ENCODE measurements at regions of chr5 and their contacts with region 1.

Region 1: GRCh38 chr5:157253547-157253946 is 12.4 kb upstream of the CYFIP2 start:
- DNase-seq: no peak
- ATAC-seq: peak; percentile 84

Region 2: DNA sequence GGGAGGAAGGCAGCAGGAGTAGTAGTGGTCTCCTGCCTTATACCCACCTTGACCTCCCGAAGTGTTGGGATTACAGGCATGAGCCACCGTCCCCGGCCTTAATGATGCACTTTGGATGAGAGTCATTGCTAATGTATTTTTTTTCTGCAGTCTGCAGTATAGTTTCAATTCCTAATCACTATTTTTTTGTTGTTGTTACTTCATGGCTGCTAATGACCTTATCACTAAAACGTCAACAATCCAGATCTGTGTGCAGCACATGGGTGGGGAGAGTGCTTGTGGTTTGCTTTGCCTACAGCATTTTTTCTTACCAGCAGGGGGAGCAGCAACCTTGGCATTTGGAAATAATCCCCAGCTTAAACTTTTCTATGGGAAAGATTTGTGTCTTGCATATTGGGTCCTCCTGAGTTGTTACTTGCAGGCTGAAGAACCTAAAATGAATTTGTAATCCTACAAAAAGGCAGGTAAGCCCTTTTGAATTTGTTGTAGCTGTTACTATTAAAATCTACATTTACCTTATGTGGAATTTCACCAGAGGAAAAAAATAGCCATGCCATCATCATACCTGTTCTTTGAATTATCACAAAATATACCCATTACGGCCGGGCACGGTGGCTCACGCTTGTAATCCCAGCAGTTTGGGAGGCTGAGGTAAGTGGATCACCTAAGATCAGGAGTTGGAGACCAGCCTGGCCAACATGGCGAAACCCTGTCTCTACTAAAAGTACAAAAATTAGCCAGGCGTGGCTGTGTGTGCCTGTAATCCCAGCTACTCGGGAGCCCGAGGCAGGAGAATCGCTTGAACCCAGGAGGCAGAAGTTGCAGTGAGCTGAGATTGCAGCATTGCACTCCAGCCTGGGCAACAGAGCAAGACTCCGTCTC is 104.6 kb before region 1 on chr5:
- intact Hi-C with region 1: loop called (anchors 5 kb)
- DNase-seq: no peak
- ATAC-seq: peak; percentile 73

Measured in Right ventricle myocardium inferior (tissue), 1 donor.